RWPE1 (cell line): ENCODE measurements at regions of chr2 and their contacts with region 1.

Region 1: DNA sequence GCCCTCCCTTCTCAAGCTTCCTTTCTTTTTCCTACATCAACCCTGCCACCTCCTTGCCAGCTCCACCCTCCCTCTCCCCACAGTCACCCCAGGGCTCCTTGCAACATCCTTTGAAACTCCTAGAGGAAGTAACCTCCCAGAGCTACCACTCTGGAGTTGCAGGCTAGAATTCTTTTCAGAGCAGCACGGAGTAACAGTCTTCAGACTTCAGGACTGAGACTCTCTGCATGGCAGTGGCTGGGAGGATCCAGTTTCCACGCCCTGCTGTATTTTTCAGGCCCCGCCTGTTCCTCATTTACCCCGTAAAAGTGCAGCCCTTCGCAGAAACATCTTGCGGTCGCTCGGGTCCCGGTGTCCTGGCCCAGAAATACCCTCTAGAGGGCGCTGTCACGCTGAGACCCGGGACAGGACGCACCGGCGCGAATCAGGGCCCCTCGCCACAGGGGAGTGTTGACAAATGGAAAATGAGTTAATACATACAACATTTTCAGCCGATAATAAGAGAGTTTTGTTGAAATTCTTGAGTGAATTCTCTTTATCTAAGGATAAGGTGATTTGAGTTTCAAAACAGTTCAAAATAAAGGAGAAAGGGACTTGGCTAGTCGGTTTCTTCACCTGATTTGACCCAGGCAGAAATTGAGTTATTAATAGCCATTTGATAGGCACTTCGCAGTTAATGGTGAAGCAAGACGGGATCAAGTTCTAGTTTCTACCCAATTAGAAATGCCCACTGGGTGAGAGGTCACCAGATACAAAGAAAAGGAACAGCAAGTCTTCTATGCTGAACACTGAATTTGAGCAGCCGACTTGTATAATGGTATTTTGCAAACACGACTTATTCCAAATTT is 18.5 kb upstream of the NTSR2 start:
- DNase-seq: peak; percentile 79
- H3K27ac ChIP-seq: peak overlapping the region; percentile 52
- CTCF ChIP-seq: peak; percentile 80

Region 2: GRCh38 chr2:11778923-11779757 is 90.7 kb after region 1 on chr2:
- CTCF ChIA-PET with region 1: interaction called, 10 read pairs
- POLR2A ChIA-PET with region 1: no interaction called
- DNase-seq: peak; percentile 82
- H3K27ac ChIP-seq: no peak overlapping the region
- CTCF ChIP-seq: peak; percentile 93

Region 3: DNA sequence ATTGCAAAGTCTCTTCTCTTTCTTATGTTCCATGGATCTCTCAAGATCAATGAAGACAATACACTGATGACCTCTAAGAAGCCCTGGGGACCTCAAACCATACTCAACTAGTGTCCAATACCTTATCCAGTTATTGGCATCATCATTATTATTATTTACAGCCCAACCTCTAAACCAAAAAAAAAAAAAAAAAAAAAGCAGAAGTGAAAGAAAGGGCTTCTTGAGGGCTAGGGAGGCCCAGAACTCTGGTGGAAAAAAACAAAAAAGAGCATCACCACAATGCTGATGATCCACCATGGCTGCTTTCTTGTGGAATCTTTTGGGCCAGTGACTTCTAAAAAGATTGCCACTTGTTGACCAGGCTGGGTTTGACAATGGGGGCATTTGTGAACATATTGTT is 382.9 kb after region 1 on chr2:
- CTCF ChIA-PET with region 1: no interaction called
- POLR2A ChIA-PET with region 1: no interaction called
- DNase-seq: no peak
- H3K27ac ChIP-seq: no peak overlapping the region
- CTCF ChIP-seq: no peak